Left cardiac atrium (tissue), 4 donors: ENCODE measurements at regions of chr9 and their contacts with region 1.

Region 1: GRCh38 chr9:34591248-34591916 is 1.9 kb upstream of the CNTFR start:
- DNase-seq: peak; percentile 90
- ATAC-seq: peak; percentile 67 to 88

Region 2: GRCh38 chr9:34222451-34222850 is 368.9 kb before region 1 on chr9:
- intact Hi-C with region 1: no loop called
- DNase-seq: no peak
- ATAC-seq: peak in 1 of 2 donors; percentile 65

Region 3: DNA sequence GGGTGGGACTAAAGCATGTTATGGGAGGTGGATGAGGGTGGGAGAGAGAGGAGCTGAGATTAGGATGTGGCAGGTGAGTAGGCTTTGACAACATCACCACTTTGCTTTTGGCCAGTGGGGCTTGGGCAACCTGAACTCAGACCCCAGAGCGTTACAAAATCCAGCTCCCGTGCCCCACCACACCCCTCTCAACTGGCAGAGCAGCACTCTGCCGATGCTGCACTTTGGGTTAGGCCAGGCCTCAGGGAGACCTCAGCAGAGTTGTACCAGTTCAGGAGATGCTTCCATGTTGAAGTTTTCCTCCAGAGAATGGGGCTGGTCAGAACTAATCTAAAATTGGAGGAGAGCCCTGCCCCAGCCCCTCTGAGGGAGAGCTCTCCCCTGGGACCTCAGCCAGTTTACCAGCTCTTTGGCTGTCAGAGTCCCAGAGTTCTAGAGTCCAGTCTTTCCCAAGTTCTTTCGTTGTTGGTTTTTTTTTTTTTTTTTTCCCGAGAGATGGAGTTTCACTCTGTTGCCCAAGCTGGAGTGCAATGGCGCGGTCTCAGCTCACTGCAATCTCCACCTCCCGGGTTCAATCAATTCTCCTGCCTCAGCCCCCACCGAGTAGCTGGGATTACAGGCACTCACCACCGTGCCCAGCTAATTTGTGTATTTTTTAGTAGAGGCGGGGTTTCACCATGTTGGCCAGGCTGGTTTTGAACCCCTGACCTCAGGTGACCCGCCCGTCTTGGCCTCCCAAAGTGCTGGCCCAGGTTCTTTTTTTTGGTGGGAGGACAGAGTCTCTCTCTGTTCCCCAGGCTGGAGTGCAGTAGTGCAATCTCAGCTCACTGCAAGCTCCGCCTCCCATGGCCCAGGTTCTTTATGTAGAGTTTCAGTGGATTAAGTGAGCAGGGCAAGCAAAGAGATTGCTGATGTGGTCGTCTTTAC is 244.2 kb before region 1 on chr9:
- intact Hi-C with region 1: no loop called
- DNase-seq: no peak
- ATAC-seq: no peak

Region 4: DNA sequence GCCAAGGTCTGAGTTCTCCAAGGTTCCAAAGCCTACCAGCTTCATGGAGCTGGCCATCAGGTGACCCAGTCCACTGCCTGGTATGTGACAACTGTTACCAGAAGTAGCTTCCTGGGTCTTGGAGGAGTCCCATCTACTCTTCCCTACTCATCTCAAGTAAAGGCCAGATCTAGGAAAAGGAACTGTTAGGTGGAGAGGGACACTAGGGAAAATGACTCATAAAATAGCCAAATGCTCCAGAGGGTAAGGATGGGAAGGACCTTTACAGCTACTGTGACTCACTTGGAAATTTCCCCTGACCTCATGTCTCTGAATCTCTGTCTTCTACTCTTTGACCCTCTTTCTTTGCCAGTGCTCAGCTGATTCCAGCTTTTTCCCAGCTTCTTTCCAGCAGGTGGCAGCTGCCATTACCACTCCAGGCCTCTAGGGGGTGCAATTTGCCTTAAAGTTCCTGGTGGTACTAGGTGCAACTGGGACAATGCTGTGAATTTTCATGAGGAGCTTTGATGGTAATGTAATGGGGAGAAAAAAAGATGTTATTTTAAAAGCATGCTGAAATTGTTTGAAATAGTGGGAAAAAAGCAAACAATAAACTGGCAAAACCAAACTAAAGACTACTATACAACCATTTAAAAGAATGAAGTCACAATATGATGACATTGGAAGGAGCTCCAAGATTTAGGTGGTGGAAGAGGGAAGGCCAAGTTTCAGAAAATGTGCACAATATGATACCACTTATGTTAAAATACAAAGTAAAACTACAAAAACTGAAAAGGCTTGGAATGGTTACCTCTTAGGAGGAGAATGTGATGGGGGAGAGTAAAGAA is 187.6 kb before region 1 on chr9:
- intact Hi-C with region 1: loop called in 1 of 2 experiments (anchors 5 kb)
- DNase-seq: peak; percentile 57
- ATAC-seq: peak; percentile 54 to 71

Region 5: GRCh38 chr9:34546834-34547827 is 44.3 kb before region 1 on chr9:
- intact Hi-C with region 1: loop called (anchors 1 to 2 kb)
- DNase-seq: peak; percentile 67
- ATAC-seq: peak; percentile 46 to 76

Region 6: GRCh38 chr9:34553511-34554021 is 37.8 kb before region 1 on chr9:
- intact Hi-C with region 1: loop called (anchors 1 to 2 kb)
- DNase-seq: peak; percentile 20
- ATAC-seq: no peak